Activated CD4-positive, alpha-beta T cell treated with anti-CD3 and anti-CD28 coated beads for 36 hours (primary cell): ENCODE measurements at regions of chr1 and their contacts with region 1.

Region 1: GRCh38 chr1:61732726-61733125 is 7.8 kb upstream of the TM2D1 start:
- DNase-seq: no peak
- ATAC-seq: no peak
- H3K4me3 Mint-ChIP-seq: no peak overlapping the region
- H3K27ac Mint-ChIP-seq: no peak overlapping the region
- H3K4me1 Mint-ChIP-seq: peaks cover 2% of the 10 kb centered on the region
- H3K27me3 Mint-ChIP-seq: no peaks in the 10 kb centered on the region

Region 2: DNA sequence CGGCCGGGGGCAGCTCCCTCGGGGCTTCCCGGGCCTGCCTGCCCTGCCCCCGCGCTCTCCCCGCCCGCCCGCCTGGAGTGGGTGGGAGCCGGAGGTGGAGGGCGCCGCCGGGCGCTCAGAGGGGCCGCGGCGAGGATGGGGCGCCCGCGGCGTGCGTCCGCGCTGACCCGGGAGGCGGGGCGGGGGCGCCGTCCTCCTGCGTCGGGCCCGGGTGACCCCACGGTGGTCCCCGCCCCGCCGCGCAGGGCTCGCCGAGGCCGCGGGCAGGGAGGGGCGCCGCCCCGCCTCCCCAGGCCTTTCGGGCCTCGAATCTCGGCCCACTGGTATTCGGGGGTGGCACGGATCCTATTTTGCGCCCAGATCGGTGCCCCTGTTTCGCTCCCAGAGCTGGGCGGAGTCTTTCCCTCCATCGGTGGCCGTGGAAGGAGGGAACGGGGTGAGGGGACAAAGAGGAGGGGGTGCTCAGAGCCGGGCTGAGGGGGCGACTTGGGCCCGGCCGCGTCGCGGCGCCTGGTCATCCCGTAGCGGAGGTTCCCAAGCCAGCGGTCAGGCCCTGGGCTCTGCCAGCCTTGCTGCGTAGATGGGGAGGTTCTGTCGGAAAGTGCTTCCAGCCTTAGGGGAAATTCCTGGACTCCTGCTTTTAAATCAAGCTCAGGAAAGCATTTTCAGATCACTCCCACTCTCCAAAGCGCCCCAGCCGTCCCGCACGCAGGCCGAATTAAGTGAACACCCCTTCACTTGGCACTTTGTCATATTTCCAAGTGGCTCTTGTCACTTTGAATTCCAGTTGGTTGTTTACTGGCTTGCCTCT is 10.1 kb after region 1 on chr1:
- CTCF ChIA-PET with region 1: no interaction called
- POLR2A ChIA-PET with region 1: no interaction called
- intact Hi-C with region 1: no loop called
- DNase-seq: no peak
- ATAC-seq: peak; percentile 52
- H3K4me3 Mint-ChIP-seq: peak overlapping the region; percentile 86
- H3K27ac Mint-ChIP-seq: peak overlapping the region; percentile 65
- H3K4me1 Mint-ChIP-seq: peaks cover 29% of the 10 kb centered on the region
- H3K27me3 Mint-ChIP-seq: no peaks in the 10 kb centered on the region

Region 3: DNA sequence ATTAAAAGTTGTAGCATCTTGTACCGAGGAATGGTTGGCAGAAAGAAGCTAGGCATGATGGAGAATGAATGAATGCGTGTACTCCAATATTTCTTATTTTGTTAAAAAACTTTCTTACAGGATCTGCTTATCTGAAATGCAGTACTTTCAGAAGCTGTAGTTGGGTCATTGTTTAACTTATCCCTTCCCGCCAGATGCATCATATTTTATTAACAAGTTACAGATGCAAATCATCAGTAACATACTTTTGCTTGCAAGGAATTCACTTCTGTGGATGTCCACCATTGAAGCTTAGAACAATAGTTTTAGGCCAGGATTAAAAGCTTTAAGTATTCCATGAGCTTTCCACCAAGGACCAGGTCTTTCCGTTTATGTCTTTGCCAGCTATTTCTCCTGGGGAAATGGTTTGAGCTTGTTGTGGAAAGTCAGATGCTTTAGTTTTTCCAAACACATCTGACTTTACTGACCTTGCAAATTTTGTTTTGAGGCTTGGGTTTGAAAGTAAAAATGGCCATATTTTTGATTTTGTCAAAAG is 74.9 kb after region 1 on chr1:
- CTCF ChIA-PET with region 1: no interaction called
- POLR2A ChIA-PET with region 1: interaction called, 10 read pairs
- intact Hi-C with region 1: no loop called
- DNase-seq: no peak
- ATAC-seq: no peak
- H3K4me3 Mint-ChIP-seq: no peak overlapping the region
- H3K27ac Mint-ChIP-seq: no peak overlapping the region
- H3K4me1 Mint-ChIP-seq: no peaks in the 10 kb centered on the region
- H3K27me3 Mint-ChIP-seq: no peaks in the 10 kb centered on the region

Region 4: DNA sequence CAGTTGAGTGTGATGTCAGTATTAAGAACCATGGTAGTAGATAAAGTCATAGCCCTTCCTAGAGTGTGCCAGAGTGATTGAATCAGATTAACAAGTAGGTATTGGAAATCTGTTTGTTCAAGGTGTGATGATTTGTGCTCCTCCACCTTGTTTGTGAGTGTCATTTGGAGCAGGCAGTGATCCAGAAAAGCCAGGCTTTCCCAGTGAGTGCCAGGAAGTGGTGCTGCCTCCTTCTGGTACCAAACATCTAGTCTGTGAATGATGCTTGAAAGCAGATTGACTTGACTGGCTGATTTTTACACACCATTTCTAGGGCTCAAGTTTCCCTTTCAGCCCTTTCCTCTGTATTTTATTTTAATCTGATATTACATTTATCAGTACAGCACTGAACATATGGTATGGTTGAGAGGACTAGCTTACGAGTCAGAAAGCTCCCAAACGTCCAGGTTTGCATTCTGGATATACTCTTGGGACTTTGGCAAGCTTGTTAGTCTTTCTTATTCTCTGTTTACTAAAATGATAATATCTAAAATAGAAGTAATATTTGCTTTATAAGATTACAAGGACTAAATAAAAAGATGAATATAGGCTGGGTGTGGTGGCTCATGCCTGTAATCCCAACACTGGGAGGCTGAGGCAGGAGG is 110.3 kb after region 1 on chr1:
- CTCF ChIA-PET with region 1: no interaction called
- POLR2A ChIA-PET with region 1: no interaction called
- intact Hi-C with region 1: no loop called
- DNase-seq: no peak
- ATAC-seq: no peak
- H3K4me3 Mint-ChIP-seq: no peak overlapping the region
- H3K27ac Mint-ChIP-seq: no peak overlapping the region
- H3K4me1 Mint-ChIP-seq: no peaks in the 10 kb centered on the region
- H3K27me3 Mint-ChIP-seq: no peaks in the 10 kb centered on the region